GM12878 (cell line): ENCODE measurements at regions of chr1 and their contacts with region 1.

Region 1: DNA sequence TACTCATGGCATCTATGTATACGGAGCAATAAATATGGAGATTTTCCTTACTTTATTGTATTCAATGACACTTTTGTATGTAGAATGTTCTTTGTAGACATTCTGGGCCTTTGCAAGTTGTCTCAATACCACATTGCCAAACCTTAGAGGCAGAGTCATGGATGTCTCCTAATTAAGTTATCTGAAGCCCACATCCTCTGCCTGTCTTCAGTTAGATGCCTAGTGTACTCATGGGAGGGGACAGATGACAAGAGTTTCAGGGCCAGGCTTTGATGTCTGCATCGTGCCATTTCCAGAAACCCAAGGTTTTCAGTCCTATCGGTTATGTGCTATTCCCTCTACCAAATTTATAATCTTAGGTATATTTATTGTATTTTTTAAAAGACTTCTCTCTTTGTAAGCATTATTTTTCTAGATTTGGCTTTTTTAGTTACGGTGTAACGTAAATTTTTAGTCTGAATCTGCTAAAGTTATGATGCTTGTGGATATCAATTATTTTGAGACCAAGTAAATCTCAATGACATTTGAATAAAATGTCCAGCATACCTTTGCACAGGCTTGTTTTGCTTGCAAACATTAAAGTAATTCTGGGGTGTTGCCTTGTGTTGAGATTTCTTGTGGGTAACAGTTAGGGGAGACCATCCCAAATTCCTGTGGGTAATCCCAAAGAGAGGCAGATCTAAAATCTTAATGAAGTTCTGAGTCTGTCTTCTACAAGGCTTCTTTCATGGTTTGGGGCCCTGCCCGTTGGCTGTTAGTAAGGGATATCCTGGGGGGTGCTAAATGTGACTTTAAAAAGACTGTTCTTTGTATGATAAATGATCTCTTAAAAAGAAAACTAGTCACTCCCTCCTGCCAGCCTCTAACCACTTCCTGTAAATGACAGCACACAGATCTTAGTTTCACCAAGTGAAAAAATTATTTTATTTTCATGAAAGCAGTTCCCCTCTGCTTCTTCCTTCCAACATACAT is 8.0 kb upstream of the MACF1 start:
- DNase-seq: no peak
- ATAC-seq: peak; percentile 77
- H3K4me3 ChIP-seq: peak overlapping the region; percentile 26
- H3K27ac ChIP-seq: peak overlapping the region; percentile 53
- H3K4me1 ChIP-seq: peaks cover 54% of the 10 kb centered on the region
- H3K27me3 ChIP-seq: no peaks in the 10 kb centered on the region
- CTCF ChIP-seq: no peak
- EP300 ChIP-seq: peak in 1 of 2 experiments; percentile 60; a peak in 1 of 4 replicates
- POLR2A ChIP-seq: no peak
- RAD21 ChIP-seq: no peak

Region 2: DNA sequence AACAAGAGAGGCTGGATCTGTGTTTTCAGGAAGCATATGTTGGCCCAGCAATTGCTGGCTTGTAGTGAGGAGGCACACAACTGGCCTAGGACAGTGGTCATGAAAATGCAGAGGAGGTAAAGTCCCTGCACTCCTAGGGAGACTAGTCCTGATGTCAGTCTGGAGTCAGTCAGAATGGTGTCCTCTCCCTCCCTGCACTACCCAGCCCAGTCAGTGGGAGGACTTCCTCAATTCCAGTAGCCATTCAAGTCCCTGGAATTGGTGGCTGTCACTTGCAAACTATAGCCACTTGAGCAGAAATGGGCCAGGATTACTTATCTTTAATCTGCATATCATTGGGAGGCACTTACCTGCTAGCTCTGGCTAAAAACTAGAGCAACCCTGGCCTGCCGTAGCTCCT is 151.8 kb before region 1 on chr1:
- CTCF ChIA-PET with region 1: no interaction called
- POLR2A ChIA-PET with region 1: no interaction called
- RAD21 ChIA-PET with region 1: no interaction called
- SMC1A ChIA-PET with region 1: no interaction called
- in situ Hi-C with region 1: no loop called
- intact Hi-C with region 1: no loop called
- DNase-seq: no peak
- ATAC-seq: no peak
- H3K4me3 ChIP-seq: no peak overlapping the region
- H3K27ac ChIP-seq: no peak overlapping the region
- H3K4me1 ChIP-seq: peaks cover 13% of the 10 kb centered on the region
- H3K27me3 ChIP-seq: no peaks in the 10 kb centered on the region
- CTCF ChIP-seq: no peak
- EP300 ChIP-seq: no peak
- POLR2A ChIP-seq: no peak
- RAD21 ChIP-seq: no peak

Region 3: GRCh38 chr1:39110325-39110851 is 86.1 kb before region 1 on chr1:
- CTCF ChIA-PET with region 1: interaction called, 127 read pairs
- POLR2A ChIA-PET with region 1: interaction called, 10 read pairs
- RAD21 ChIA-PET with region 1: interaction called, 83 read pairs
- SMC1A ChIA-PET with region 1: interaction called, 149 read pairs
- in situ Hi-C with region 1: no loop called
- intact Hi-C with region 1: no loop called
- DNase-seq: no peak
- ATAC-seq: peak; percentile 1; the same call in 1 of the 3 replicates
- H3K4me3 ChIP-seq: 0 out of 2 replicates have a peak overlapping the region, but pooled peaks have one; percentile 9
- H3K27ac ChIP-seq: peak overlapping the region; percentile 31; the same call in 1 of the 2 replicates
- H3K4me1 ChIP-seq: peaks cover 24% of the 10 kb centered on the region; the same call in 1 of the 2 replicates
- H3K27me3 ChIP-seq: no peaks in the 10 kb centered on the region
- CTCF ChIP-seq: no peak
- EP300 ChIP-seq: no peak
- POLR2A ChIP-seq: no peak
- RAD21 ChIP-seq: no peak

Region 4: GRCh38 chr1:39167632-39168209 is 28.8 kb before region 1 on chr1:
- CTCF ChIA-PET with region 1: interaction called, 20 read pairs
- POLR2A ChIA-PET with region 1: no interaction called
- RAD21 ChIA-PET with region 1: interaction called, 6 read pairs
- SMC1A ChIA-PET with region 1: interaction called, 10 read pairs
- in situ Hi-C with region 1: no loop called
- intact Hi-C with region 1: no loop called
- DNase-seq: no peak
- ATAC-seq: no peak
- H3K4me3 ChIP-seq: no peak overlapping the region
- H3K27ac ChIP-seq: no peak overlapping the region
- H3K4me1 ChIP-seq: no peaks in the 10 kb centered on the region
- H3K27me3 ChIP-seq: no peaks in the 10 kb centered on the region
- CTCF ChIP-seq: no peak
- EP300 ChIP-seq: no peak
- POLR2A ChIP-seq: no peak
- RAD21 ChIP-seq: no peak

Region 5: GRCh38 chr1:39238476-39238875 is 41.9 kb after region 1 on chr1:
- CTCF ChIA-PET with region 1: interaction called, 48 read pairs
- POLR2A ChIA-PET with region 1: no interaction called
- RAD21 ChIA-PET with region 1: interaction called, 19 read pairs
- SMC1A ChIA-PET with region 1: interaction called, 655 read pairs
- in situ Hi-C with region 1: no loop called
- intact Hi-C with region 1: no loop called
- DNase-seq: no peak
- ATAC-seq: no peak
- H3K4me3 ChIP-seq: no peak overlapping the region
- H3K27ac ChIP-seq: no peak overlapping the region
- H3K4me1 ChIP-seq: no peaks in the 10 kb centered on the region
- H3K27me3 ChIP-seq: no peaks in the 10 kb centered on the region
- CTCF ChIP-seq: no peak
- EP300 ChIP-seq: no peak
- POLR2A ChIP-seq: no peak
- RAD21 ChIP-seq: no peak

Region 6: DNA sequence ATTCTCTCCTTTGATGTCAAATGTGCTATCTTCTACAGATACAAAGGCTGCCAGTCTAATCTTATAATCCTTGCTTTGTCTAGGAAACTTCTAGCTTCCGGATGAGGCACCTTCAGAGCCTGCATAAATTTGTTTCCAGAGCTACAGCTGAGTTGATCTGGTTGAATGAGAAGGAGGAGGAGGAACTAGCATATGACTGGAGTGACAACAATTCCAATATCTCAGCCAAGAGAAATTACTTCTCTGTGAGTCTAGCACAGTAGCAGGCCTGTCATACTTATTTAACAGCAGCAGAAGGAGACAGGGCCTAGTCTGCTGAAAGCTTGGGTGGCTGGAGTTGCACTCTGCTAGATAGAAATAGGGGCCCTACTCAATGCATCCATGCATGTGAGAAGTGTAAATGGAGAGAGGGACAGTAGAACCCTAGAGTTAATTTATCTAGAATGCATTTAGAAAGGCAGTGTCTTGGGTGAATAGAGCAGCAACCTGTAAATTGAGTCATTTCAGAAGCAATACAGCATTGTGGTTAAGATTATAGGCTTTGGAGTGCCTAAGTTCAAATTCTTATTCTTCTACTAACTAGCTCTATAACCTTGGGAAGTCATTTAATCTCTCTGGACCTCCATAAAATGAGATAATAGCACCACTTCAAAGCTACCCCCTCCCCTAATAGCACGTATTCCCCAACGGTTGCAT is 97.0 kb after region 1 on chr1:
- CTCF ChIA-PET with region 1: interaction called, 13 read pairs
- POLR2A ChIA-PET with region 1: interaction called, 3 read pairs
- RAD21 ChIA-PET with region 1: no interaction called
- SMC1A ChIA-PET with region 1: interaction called, 10 read pairs
- in situ Hi-C with region 1: no loop called
- intact Hi-C with region 1: no loop called
- DNase-seq: no peak
- ATAC-seq: no peak; the same call in 2 of the 3 replicates
- H3K4me3 ChIP-seq: no peak overlapping the region
- H3K27ac ChIP-seq: no peak overlapping the region
- H3K4me1 ChIP-seq: no peaks in the 10 kb centered on the region
- H3K27me3 ChIP-seq: no peaks in the 10 kb centered on the region
- CTCF ChIP-seq: no peak
- EP300 ChIP-seq: no peak
- POLR2A ChIP-seq: no peak
- RAD21 ChIP-seq: no peak

Region 7: DNA sequence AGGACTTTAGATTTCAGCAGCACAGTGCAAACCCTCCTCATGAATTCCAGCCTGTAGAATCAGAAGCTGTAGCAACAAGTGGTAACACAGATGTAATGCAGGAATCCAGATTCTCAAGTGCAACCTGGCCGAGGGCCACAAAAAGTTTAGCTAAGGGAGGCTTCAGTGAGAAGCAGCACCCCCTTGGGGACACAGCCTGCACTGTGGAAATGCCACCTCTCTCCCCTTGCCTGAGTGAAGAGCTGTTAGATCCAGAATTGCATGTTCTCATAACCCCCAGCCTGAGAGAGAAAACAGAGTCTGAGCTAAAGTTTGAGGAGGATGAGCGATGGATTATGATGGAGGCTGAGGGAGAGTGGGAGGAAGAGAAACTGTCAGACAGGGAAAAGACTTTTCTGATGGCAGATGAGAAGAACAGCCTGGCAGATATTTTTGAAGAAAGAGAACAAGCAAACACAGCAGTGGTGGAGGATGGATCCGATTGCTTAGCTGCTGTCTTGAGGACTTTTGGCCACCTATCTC is 214.4 kb after region 1 on chr1:
- CTCF ChIA-PET with region 1: interaction called, 23 read pairs
- POLR2A ChIA-PET with region 1: no interaction called
- RAD21 ChIA-PET with region 1: interaction called, 9 read pairs
- SMC1A ChIA-PET with region 1: interaction called, 9 read pairs
- in situ Hi-C with region 1: no loop called
- intact Hi-C with region 1: no loop called
- DNase-seq: no peak
- ATAC-seq: peak; percentile 44
- H3K4me3 ChIP-seq: no peak overlapping the region
- H3K27ac ChIP-seq: no peak overlapping the region
- H3K4me1 ChIP-seq: peaks cover 33% of the 10 kb centered on the region
- H3K27me3 ChIP-seq: no peaks in the 10 kb centered on the region
- CTCF ChIP-seq: peak; percentile 65 to 70 (median 68)
- EP300 ChIP-seq: no peak
- POLR2A ChIP-seq: no peak
- RAD21 ChIP-seq: peak; percentile 65